SK-N-SH (cell line): ENCODE measurements at regions of chr17 and their contacts with region 1.

Region 1: DNA sequence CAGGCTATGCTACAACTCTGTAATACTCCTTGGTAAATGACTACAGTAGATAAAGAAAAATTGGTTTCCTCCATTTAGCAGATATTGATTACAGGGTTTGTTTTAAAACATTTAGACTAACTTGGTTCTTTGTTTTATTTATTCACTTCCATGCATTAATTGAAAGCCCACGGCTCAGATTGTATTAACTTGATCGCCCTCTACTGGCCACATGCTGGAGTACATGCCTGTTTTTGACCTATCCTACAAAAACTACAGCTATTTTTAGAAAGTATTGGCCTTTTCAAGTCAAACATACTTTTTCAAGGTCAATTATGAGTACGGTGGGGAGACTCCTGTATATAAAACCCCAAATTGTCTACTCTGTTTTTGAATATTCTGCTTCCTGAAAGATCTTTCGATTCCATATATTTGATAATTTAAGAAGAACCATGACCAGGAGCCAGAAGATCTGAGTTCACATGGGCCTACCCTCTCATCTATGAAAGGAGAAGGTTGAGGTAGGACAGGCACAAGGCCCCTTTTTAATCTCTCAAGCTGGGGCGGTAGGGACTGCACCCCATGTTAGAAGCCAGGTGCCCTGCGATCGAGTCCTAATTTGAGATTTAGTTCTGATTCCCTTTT is 51.8 kb downstream of the CA10 start:
- DNase-seq: peak; percentile 69
- H3K4me3 ChIP-seq: no peak overlapping the region
- H3K27ac ChIP-seq: no peak overlapping the region
- H3K4me1 ChIP-seq: no peaks in the 10 kb centered on the region
- H3K27me3 ChIP-seq: no peaks in the 10 kb centered on the region
- CTCF ChIP-seq: peak; percentile 100
- EP300 ChIP-seq: no peak
- RAD21 ChIP-seq: peak; percentile 93

Region 2: GRCh38 chr17:51251010-51251409 is 855.7 kb before region 1 on chr17:
- CTCF ChIA-PET with region 1: no interaction called
- POLR2A ChIA-PET with region 1: no interaction called
- DNase-seq: no peak
- H3K4me3 ChIP-seq: no peak overlapping the region
- H3K27ac ChIP-seq: peak overlapping the region in 1 of 2 experiments; percentile 13; a peak in 2 of 4 replicates
- H3K4me1 ChIP-seq: peaks cover 0 to 11% of the 10 kb centered on the region in 2 experiments; a peak in 2 of 4 replicates
- H3K27me3 ChIP-seq: no peaks in the 10 kb centered on the region
- CTCF ChIP-seq: no peak
- EP300 ChIP-seq: no peak
- RAD21 ChIP-seq: no peak

Region 3: DNA sequence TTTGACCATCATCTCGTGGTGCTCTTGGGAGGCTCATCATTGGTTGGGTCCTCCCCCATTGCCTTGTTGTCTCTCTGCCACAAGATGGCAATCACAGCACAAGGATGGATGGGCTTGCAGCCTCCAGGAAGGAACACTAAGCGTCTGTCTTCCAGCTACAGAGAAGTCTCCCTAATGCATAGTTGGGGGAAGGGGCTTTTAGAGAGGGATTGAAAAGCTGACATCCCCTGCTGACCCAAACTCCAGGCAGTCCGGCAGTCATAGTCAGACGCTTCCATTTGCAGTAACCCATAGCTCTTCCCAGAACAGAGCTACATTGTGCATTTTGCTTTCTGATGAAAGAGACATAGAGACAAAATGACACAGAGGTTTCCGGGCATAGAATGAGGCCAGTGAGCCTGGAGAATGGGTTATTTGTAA is 735.0 kb before region 1 on chr17:
- CTCF ChIA-PET with region 1: interaction called, 27 read pairs
- POLR2A ChIA-PET with region 1: no interaction called
- DNase-seq: peak; percentile 85
- H3K4me3 ChIP-seq: peak overlapping the region in 1 of 2 experiments; percentile 10; a peak in 1 of 4 replicates
- H3K27ac ChIP-seq: peak overlapping the region in 1 of 2 experiments; percentile 4; a peak in 1 of 4 replicates
- H3K4me1 ChIP-seq: peaks cover 0 to 16% of the 10 kb centered on the region in 2 experiments; a peak in 1 of 4 replicates
- H3K27me3 ChIP-seq: no peaks in the 10 kb centered on the region
- CTCF ChIP-seq: peak; percentile 57
- EP300 ChIP-seq: no peak
- RAD21 ChIP-seq: peak; percentile 100

Region 4: DNA sequence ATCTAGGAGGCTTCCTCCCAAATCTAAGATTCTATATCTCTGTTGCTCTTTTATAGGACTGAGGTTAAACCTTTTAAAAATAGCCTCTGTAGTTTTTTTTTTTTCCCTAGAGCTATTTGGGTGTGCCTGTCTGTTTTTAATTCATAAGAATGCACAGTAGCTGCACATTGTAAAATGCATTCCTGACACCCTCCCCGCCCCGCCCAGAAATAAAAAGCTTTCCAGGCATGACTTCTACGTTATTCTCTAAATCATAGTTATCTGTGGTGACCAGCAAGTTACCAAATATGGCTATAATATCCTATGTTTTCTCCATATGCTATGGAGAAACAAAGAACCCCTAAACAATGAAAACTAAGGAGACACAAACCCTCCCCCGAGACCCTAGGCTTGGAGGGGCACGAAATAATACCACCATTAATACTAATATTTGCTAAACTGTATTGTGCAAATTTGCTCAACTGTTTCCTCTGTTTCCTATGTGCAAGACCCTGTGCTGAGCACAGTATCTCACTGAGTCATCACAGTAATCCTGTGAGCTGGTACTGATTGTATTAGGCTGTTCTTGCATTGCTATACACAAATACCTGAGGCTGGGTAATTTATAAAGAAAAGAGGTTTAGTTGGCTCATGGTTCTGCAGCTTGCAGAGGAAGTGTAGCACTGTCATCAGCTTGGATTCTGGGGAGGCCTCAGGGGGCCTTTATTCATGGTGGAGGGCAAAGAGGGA is 336.6 kb before region 1 on chr17:
- CTCF ChIA-PET with region 1: interaction called, 198 read pairs
- POLR2A ChIA-PET with region 1: no interaction called
- DNase-seq: no peak
- H3K4me3 ChIP-seq: no peak overlapping the region
- H3K27ac ChIP-seq: no peak overlapping the region
- H3K4me1 ChIP-seq: peaks cover 0 to 3% of the 10 kb centered on the region in 2 experiments; a peak in 1 of 4 replicates
- H3K27me3 ChIP-seq: no peaks in the 10 kb centered on the region
- CTCF ChIP-seq: no peak
- EP300 ChIP-seq: no peak
- RAD21 ChIP-seq: no peak

Region 5: DNA sequence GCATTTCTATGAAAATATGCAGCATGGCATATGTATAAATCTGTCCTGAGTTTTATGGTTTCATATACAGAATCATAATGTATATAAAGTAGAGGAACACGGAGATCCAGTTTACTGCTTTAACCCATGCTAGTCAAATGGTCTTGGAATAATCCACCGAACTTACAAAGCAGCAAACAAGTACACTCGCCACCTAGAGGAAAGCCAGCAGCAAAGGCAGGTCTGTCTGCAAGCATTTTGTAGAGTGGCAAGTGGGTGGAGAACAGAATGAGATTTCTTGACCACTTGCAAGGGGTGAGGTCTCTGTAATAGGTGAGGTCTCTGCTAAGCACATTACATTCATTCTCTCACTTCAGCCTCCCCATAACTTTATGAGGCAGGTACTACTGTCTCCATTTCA is 256.5 kb before region 1 on chr17:
- CTCF ChIA-PET with region 1: interaction called, 22 read pairs
- POLR2A ChIA-PET with region 1: no interaction called
- DNase-seq: no peak
- H3K4me3 ChIP-seq: no peak overlapping the region
- H3K27ac ChIP-seq: no peak overlapping the region
- H3K4me1 ChIP-seq: peaks cover 0 to 5% of the 10 kb centered on the region in 2 experiments; a peak in 2 of 4 replicates
- H3K27me3 ChIP-seq: no peaks in the 10 kb centered on the region
- CTCF ChIP-seq: peak; percentile 8; the same call in 1 of the 2 replicates
- EP300 ChIP-seq: no peak
- RAD21 ChIP-seq: no peak

Region 6: DNA sequence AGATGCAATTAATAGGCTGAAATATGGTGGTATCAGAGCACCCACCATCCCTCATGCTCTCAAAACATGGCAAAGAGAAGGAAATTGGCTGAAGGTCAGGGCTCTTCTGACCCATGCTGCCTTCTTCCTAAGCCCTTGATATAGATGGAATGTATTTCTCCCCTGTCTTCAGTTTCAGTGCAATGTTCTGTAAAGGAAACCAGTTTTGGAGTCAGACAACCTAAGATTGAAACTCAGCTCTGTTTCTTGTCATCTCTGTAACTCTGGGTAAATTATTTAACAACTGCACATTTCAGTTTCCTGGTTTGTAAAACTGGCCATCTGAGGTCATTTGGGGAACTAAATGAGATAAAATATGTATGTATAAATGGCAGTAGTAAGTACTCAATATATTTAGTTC is 192.2 kb before region 1 on chr17:
- CTCF ChIA-PET with region 1: interaction called, 17 read pairs
- POLR2A ChIA-PET with region 1: no interaction called
- DNase-seq: no peak
- H3K4me3 ChIP-seq: no peak overlapping the region
- H3K27ac ChIP-seq: no peak overlapping the region
- H3K4me1 ChIP-seq: no peaks in the 10 kb centered on the region
- H3K27me3 ChIP-seq: no peaks in the 10 kb centered on the region
- CTCF ChIP-seq: no peak
- EP300 ChIP-seq: no peak
- RAD21 ChIP-seq: no peak

Region 7: DNA sequence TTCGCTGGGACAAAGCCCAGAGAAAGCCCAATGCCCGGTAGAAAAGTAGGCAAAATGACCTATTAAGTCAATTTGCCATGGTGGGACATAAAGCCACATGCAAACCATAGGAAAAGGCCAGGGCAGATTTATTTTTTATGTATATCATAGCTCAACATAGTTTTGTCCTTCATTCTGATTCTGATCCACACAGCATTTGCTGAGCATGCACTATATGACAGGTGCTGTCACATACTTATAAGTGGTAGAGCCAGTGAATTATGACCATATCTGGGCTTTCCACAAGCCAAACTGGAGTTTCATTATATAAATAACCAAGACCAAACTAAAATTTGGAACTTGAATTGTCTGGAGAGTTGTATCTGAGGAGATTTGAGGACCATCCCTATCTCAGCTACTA is 22.6 kb before region 1 on chr17:
- CTCF ChIA-PET with region 1: interaction called, 28 read pairs
- POLR2A ChIA-PET with region 1: no interaction called
- DNase-seq: no peak
- H3K4me3 ChIP-seq: no peak overlapping the region
- H3K27ac ChIP-seq: no peak overlapping the region
- H3K4me1 ChIP-seq: no peaks in the 10 kb centered on the region
- H3K27me3 ChIP-seq: no peaks in the 10 kb centered on the region
- CTCF ChIP-seq: no peak
- EP300 ChIP-seq: no peak
- RAD21 ChIP-seq: no peak

Region 8: DNA sequence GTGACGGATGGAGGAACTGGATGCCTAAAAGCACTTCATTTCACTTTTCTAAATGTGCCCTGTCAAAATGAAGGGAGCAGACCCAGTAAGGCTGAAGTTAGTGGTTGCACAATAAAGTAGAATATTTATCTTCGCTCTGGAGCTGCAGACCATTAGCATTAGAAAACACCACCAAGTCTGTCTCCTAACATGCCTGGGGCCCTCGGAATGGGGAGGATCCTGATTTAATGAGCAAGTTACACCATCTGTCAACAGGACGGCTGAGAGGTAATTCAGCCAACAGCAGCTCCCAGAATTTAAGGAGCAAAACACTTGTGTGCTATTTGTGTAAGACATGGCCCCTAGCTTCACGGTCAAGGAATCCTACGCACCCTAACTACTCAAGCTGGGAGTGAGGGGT is 29.4 kb after region 1 on chr17:
- CTCF ChIA-PET with region 1: interaction called, 19 read pairs
- POLR2A ChIA-PET with region 1: no interaction called
- DNase-seq: no peak
- H3K4me3 ChIP-seq: no peak overlapping the region
- H3K27ac ChIP-seq: no peak overlapping the region
- H3K4me1 ChIP-seq: no peaks in the 10 kb centered on the region
- H3K27me3 ChIP-seq: no peaks in the 10 kb centered on the region
- CTCF ChIP-seq: no peak
- EP300 ChIP-seq: no peak
- RAD21 ChIP-seq: no peak

Region 9: DNA sequence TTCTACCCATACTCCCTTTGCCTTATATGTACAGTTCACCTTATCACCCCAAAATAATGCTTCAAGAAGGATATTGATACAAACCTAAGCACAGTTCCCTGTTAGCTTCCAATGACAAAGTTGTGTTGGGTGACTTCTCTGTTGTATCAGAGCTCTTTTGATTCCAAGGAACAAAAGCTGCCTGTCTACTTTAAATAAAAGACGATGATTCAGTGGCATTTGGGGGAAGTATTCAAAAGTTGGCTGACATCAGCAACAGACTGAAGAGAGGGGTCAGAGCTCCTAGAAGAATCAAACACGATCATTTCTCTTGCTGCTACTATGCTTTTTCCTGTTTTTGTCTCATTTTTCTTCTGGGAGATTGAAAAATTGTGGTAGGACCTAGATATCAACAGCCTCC is 121.2 kb after region 1 on chr17:
- CTCF ChIA-PET with region 1: no interaction called
- POLR2A ChIA-PET with region 1: no interaction called
- DNase-seq: no peak
- H3K4me3 ChIP-seq: no peak overlapping the region
- H3K27ac ChIP-seq: no peak overlapping the region
- H3K4me1 ChIP-seq: peaks cover 0 to 2% of the 10 kb centered on the region in 2 experiments; a peak in 1 of 4 replicates
- H3K27me3 ChIP-seq: no peaks in the 10 kb centered on the region
- CTCF ChIP-seq: no peak
- EP300 ChIP-seq: no peak
- RAD21 ChIP-seq: no peak